Pancreas (tissue), 10 donors: ENCODE measurements at regions of chr9 and their contacts with region 1.

Region 1: GRCh38 chr9:134443168-134444037 is 117.1 kb downstream of the RXRA start:
- DNase-seq: peak; percentile 84 to 97 (median 93)
- ATAC-seq: peak; percentile 92 to 96 (median 94)
- H3K4me3 ChIP-seq: no peak overlapping the region
- H3K27ac ChIP-seq: peak overlapping the region in 3 of 4 donors; percentile 28 to 46 (median 42)
- H3K4me1 ChIP-seq: peaks cover 0 to 5% (median 0%) of the 10 kb centered on the region in 3 donors
- H3K27me3 ChIP-seq: no peaks in the 10 kb centered on the region
- CTCF ChIP-seq: peak; percentile 98 to 99 (median 98)

Region 2: GRCh38 chr9:134171316-134172197 is 271.8 kb before region 1 on chr9:
- intact Hi-C with region 1: loop called (anchors 2 to 5 kb)
- DNase-seq: no peak
- ATAC-seq: peak in 1 of 4 donors; percentile 2
- H3K4me3 ChIP-seq: no peak overlapping the region
- H3K27ac ChIP-seq: no peak overlapping the region
- H3K4me1 ChIP-seq: no peaks in the 10 kb centered on the region
- H3K27me3 ChIP-seq: peaks cover 0 to 5% (median 0%) of the 10 kb centered on the region in 4 donors
- CTCF ChIP-seq: no peak

Region 3: GRCh38 chr9:134325817-134326723 is 117.3 kb before region 1 on chr9 and contains the start of gene RXRA:
- intact Hi-C with region 1: loop called in 1 of 3 experiments (anchors 5 kb)
- DNase-seq: peak; percentile 81 to 92 (median 88)
- ATAC-seq: peak; percentile 63 to 79 (median 69)
- H3K4me3 ChIP-seq: peak within 1 kb of the TSS; percentile 61 to 86 (median 68)
- H3K27ac ChIP-seq: peak within 1 kb of the TSS; percentile 84 to 91 (median 88)
- H3K4me1 ChIP-seq: peaks cover 10 to 30% (median 30%) of the 10 kb centered on the region in 3 donors
- H3K27me3 ChIP-seq: no peaks in the 10 kb centered on the region
- CTCF ChIP-seq: no peak
- total RNA-seq, gene RXRA: 20.2 to 34.1 (median 22.9) TPM

Region 4: DNA sequence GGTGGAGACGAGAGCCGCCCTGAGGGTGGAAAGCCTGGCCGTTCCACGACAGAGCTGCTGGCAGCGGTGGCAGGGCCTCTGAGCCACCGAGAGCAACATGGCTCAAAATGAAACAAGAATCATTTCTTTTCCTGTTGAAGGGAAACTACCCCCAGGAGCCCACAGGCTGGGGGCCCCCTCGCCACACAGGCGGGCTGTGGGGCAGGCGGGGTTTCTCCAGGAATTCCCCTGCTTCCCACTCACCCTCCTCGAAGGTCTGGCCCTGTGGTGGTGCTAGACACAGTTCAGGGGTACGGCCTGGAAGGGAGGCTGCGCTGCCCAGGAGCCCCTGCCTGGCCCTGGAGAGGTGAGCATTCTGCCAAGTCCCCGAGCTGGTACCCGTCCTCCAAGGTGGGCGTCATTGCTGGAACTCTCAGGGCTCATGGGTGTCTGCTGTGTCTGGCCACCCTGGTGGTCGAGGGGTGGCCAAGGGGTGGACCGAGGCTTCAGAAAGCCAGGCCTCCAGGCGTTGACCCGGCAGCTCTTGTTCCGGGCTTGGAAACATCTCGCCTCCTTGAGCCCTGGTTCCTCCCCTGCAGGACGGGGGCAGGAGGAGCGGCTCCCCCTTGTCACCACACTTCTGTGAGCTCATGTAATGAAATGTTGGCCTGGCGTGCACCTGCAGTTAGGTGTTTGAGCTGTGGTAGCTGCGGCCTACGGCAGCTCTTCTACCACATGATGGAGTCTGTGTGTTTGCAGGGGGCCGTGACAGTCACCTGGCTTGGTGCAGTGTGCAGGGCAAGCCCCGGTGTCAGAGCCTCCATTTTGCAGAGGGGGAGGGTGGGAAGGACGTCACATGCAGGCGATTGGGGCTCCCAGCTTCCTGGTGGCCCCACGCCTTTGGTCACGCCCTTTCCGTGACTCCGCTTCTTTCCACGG is 51.8 kb before region 1 on chr9:
- intact Hi-C with region 1: no loop called
- DNase-seq: no peak
- ATAC-seq: no peak
- H3K4me3 ChIP-seq: no peak overlapping the region
- H3K27ac ChIP-seq: no peak overlapping the region
- H3K4me1 ChIP-seq: peaks cover 16 to 21% (median 19%) of the 10 kb centered on the region in 3 donors
- H3K27me3 ChIP-seq: no peaks in the 10 kb centered on the region
- CTCF ChIP-seq: no peak